ENCODE measurements at regions of chr13 and their contacts with region 1.

Region 1: DNA sequence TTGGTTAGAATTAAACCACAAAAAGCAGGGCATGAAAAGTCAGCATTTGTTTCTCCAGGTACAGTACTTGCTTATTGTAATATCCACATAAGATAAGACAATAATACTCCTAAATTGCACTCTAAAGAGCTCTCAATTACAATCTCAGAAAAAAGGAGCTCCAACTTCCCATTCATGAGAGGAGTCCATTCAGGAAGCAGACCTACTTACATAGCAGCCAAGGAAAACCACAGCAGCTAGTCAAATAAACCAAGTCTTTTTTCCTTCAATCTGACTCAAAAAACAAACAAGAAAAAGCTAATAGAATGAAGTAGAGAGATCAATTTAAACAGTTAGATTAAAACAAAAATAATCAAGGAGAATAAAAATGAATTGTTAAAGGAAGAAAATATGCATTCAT is 885.2 kb upstream of the SLITRK6 start:
- DNase-seq: no peak
- H3K4me3 ChIP-seq: no peak overlapping the region
- H3K27ac ChIP-seq: no peak overlapping the region
- H3K4me1 ChIP-seq: no peaks in the 10 kb centered on the region
- H3K27me3 ChIP-seq: no peaks in the 10 kb centered on the region
- CTCF ChIP-seq: no peak
- POLR2A ChIP-seq: no peak

Region 2: DNA sequence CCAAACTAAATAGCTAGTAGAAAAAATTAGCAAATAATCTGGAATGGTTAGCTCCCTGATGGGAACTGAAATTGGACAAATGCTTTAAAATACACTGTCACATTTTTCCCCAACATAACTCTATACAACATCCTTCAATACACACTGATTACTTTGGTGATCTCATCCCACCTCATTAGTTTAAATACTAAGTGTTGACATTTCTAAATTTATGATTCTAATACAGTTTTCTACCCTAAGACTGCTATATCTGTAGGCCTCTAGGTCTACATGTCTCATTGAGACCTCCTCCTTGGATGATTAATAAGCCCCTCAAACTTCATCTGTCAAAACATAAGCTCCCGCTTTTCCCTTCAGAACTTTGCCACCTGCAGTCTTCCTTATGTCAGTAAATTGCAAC is 906.1 kb after region 1 on chr13:
- intact Hi-C with region 1: loop called (anchors 10 kb)
- DNase-seq: no peak
- H3K4me3 ChIP-seq: no peak overlapping the region
- H3K27ac ChIP-seq: no peak overlapping the region
- H3K4me1 ChIP-seq: no peaks in the 10 kb centered on the region
- H3K27me3 ChIP-seq: no peaks in the 10 kb centered on the region
- CTCF ChIP-seq: no peak
- POLR2A ChIP-seq: no peak

Measured in breast epithelium (tissue), 4 donors.